ENCODE measurements at regions of chr5 and their contacts with region 1.

Region 1: GRCh38 chr5:127934791-127935256 is 148.7 kb upstream of the SLC12A2 start:
- DNase-seq: peak; percentile 88 to 99
- ATAC-seq: peak; percentile 96
- H3K4me3 ChIP-seq: no peak overlapping the region
- H3K27ac ChIP-seq: peak overlapping the region; percentile 76 to 88
- H3K4me1 ChIP-seq: peaks cover 46% of the 10 kb centered on the region
- CTCF ChIP-seq: peak; percentile 39; the same call in 2 of the 3 replicates
- EP300 ChIP-seq: peak; percentile 97 to 98
- POLR2A ChIP-seq: no peak
- RAD21 ChIP-seq: peak; percentile 45 to 82

Region 2: GRCh38 chr5:127916885-127917573 is 17.8 kb before region 1 on chr5:
- CTCF ChIA-PET with region 1: no interaction called
- POLR2A ChIA-PET with region 1: no interaction called
- DNase-seq: no peak
- ATAC-seq: no peak
- H3K4me3 ChIP-seq: no peak overlapping the region
- H3K27ac ChIP-seq: no peak overlapping the region
- H3K4me1 ChIP-seq: no peaks in the 10 kb centered on the region; the same call in 2 of the 3 replicates
- CTCF ChIP-seq: no peak
- EP300 ChIP-seq: no peak
- POLR2A ChIP-seq: no peak
- RAD21 ChIP-seq: no peak

Region 3: GRCh38 chr5:127950720-127951391 is 16.0 kb after region 1 on chr5:
- CTCF ChIA-PET with region 1: interaction called, 13 read pairs
- POLR2A ChIA-PET with region 1: interaction called, 3 read pairs
- DNase-seq: peak in 1 of 2 experiments; percentile 83
- ATAC-seq: peak; percentile 99 to 100
- H3K4me3 ChIP-seq: no peak overlapping the region
- H3K27ac ChIP-seq: peak overlapping the region; percentile 68 to 77
- H3K4me1 ChIP-seq: peaks cover 33% of the 10 kb centered on the region
- CTCF ChIP-seq: no peak
- EP300 ChIP-seq: peak; percentile 58 to 84; a peak in 3 of 5 replicates
- POLR2A ChIP-seq: no peak
- RAD21 ChIP-seq: peak in 1 of 2 experiments; percentile 55; a peak in 3 of 5 replicates

Region 4: GRCh38 chr5:127959152-127959764 is 24.4 kb after region 1 on chr5:
- CTCF ChIA-PET with region 1: interaction called, 12 read pairs
- POLR2A ChIA-PET with region 1: interaction called, 5 read pairs
- DNase-seq: peak; percentile 47 to 85
- ATAC-seq: peak; percentile 61 to 65; a peak in 5 of 6 replicates
- H3K4me3 ChIP-seq: no peak overlapping the region
- H3K27ac ChIP-seq: peak overlapping the region; percentile 76 to 80
- H3K4me1 ChIP-seq: peaks cover 48% of the 10 kb centered on the region
- CTCF ChIP-seq: no peak
- EP300 ChIP-seq: peak in 1 of 2 experiments; percentile 41; a peak in 2 of 5 replicates
- POLR2A ChIP-seq: no peak
- RAD21 ChIP-seq: no peak

Measured in A549 (cell line).